ENCODE measurements at regions of chr21 and their contacts with region 1.

Region 1: GRCh38 chr21:33127154-33127893 is 57.4 kb downstream of the OLIG1 start:
- DNase-seq: peak; percentile 71
- H3K4me3 Mint-ChIP-seq: peak overlapping the region; percentile 28
- H3K27ac Mint-ChIP-seq: no peak overlapping the region
- H3K4me1 Mint-ChIP-seq: peaks cover 13% of the 10 kb centered on the region
- H3K27me3 Mint-ChIP-seq: peaks cover 54% of the 10 kb centered on the region
- CTCF ChIP-seq: peak; percentile 62

Region 2: DNA sequence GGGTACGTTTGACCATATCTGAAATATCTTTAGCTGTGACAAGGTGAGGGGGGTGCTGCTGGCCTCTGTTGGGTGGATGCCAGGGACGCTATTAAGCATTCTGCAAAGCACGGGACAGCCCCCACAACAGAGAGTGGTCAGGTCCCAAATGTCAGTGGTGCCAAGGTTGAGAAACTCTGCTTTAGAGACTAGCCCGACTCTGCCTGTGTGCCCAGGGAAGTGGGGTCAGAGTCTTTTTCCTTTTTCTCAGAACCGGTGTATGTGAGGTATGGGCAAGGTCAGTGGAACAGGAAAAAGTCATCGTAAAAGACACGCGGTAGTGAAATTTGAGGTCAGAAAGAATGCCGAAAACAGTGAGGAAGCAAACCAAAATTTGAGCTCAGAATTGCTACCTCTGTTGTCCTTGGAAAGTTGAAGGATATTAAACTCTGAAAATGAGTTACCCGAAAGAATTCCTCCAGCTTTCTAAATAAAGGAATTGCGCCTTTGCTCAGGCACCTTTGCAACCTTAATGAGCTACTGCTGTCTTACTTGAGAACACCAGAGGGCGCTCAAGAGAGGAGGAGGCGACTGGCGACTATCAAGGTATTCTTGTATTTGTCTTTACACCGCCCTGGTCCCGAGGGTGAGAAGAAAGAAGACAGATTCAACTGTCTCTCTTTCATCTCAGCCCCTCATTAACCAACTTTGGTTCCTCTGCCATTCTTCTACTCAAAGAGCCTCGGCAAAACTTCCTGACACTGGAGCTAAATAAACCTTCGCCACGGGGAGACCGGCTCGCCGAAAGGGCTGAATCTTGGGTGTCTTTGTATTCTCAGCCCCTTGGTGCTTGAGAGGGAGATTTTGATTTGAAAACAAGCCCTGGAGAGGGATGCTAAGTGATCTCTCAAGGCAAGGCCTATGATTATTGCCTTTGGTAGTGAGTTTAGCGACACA is 187.0 kb before region 1 on chr21:
- CTCF ChIA-PET with region 1: interaction called, 4 read pairs
- intact Hi-C with region 1: loop called (anchors 2 kb)
- DNase-seq: peak; percentile 24
- H3K4me3 Mint-ChIP-seq: no peak overlapping the region
- H3K27ac Mint-ChIP-seq: no peak overlapping the region
- H3K4me1 Mint-ChIP-seq: no peaks in the 10 kb centered on the region
- H3K27me3 Mint-ChIP-seq: peaks cover 67% of the 10 kb centered on the region
- CTCF ChIP-seq: peak; percentile 60

Region 3: DNA sequence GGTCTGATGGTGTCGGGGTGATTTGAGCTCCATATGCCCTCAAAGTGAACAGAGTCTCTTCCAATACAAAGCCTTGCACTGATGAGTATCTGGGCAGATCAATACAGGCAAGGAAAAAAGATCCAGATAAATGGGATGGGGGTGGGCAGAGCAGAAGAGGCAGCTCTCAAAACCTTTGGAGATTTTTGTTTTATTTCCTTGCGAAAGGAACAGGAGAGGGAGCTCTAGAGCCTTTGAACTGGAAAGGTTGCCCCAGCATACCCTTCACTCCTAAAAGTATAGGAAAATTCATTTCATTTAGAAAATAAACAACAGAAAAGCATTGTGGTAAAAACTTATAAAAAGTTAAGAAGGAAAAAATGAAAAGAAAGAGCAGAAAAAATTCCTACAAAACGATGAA is 133.0 kb before region 1 on chr21:
- CTCF ChIA-PET with region 1: interaction called, 16 read pairs
- intact Hi-C with region 1: loop called (anchors 1 kb)
- DNase-seq: peak; percentile 16
- H3K4me3 Mint-ChIP-seq: no peak overlapping the region
- H3K27ac Mint-ChIP-seq: no peak overlapping the region
- H3K4me1 Mint-ChIP-seq: no peaks in the 10 kb centered on the region
- H3K27me3 Mint-ChIP-seq: peaks cover 18% of the 10 kb centered on the region
- CTCF ChIP-seq: no peak

Region 4: DNA sequence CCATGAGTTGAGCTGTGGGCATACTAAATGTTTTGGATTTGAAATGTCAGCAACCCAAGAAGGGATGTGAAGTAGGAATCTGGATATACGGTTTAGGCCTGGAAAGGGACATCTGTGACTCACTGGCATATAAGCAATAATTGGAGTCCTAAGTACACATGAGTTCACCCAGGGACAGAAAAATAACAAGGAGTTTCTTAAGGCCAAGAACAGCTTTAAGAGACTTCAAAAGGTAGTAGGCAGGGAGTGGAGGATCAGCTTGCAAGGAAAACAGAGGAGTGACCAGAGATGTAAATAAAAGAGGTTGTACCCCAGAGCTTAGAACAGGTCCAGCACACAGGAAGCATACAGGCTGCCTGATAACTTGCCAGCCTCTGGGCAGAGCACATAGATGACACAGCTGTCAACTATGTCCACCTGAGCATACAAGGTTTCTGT is 324.3 kb after region 1 on chr21:
- CTCF ChIA-PET with region 1: no interaction called
- intact Hi-C with region 1: no loop called
- DNase-seq: no peak
- H3K4me3 Mint-ChIP-seq: no peak overlapping the region
- H3K27ac Mint-ChIP-seq: no peak overlapping the region
- H3K4me1 Mint-ChIP-seq: peaks cover 16% of the 10 kb centered on the region
- H3K27me3 Mint-ChIP-seq: no peaks in the 10 kb centered on the region
- CTCF ChIP-seq: no peak